Naive thymus-derived CD4-positive, alpha-beta T cell (primary cell): ENCODE measurements at regions of chr16 and their contacts with region 1.

Region 1: GRCh38 chr16:83075956-83076355 is 449.2 kb downstream of the CDH13 start:
- DNase-seq: no peak
- ATAC-seq: no peak
- H3K4me3 ChIP-seq: no peak overlapping the region
- H3K4me3 Mint-ChIP-seq: no peak overlapping the region
- H3K27ac ChIP-seq: no peak overlapping the region
- H3K27ac Mint-ChIP-seq: no peak overlapping the region
- H3K4me1 ChIP-seq: no peaks in the 10 kb centered on the region
- H3K4me1 Mint-ChIP-seq: no peaks in the 10 kb centered on the region
- H3K27me3 ChIP-seq: no peaks in the 10 kb centered on the region
- H3K27me3 Mint-ChIP-seq: peaks cover 0 to 14% (median 5%) of the 10 kb centered on the region in 5 donors

Region 2: GRCh38 chr16:83058376-83058775 is 17.6 kb before region 1 on chr16:
- CTCF ChIA-PET with region 1: no interaction called
- POLR2A ChIA-PET with region 1: no interaction called
- intact Hi-C with region 1: loop called in 1 of 2 experiments (anchors 1 kb)
- DNase-seq: no peak
- ATAC-seq: no peak
- H3K4me3 ChIP-seq: no peak overlapping the region
- H3K4me3 Mint-ChIP-seq: no peak overlapping the region
- H3K27ac ChIP-seq: no peak overlapping the region
- H3K27ac Mint-ChIP-seq: no peak overlapping the region
- H3K4me1 ChIP-seq: no peaks in the 10 kb centered on the region
- H3K4me1 Mint-ChIP-seq: no peaks in the 10 kb centered on the region
- H3K27me3 ChIP-seq: no peaks in the 10 kb centered on the region
- H3K27me3 Mint-ChIP-seq: peaks cover 0 to 7% (median 3%) of the 10 kb centered on the region in 5 donors

Region 3: DNA sequence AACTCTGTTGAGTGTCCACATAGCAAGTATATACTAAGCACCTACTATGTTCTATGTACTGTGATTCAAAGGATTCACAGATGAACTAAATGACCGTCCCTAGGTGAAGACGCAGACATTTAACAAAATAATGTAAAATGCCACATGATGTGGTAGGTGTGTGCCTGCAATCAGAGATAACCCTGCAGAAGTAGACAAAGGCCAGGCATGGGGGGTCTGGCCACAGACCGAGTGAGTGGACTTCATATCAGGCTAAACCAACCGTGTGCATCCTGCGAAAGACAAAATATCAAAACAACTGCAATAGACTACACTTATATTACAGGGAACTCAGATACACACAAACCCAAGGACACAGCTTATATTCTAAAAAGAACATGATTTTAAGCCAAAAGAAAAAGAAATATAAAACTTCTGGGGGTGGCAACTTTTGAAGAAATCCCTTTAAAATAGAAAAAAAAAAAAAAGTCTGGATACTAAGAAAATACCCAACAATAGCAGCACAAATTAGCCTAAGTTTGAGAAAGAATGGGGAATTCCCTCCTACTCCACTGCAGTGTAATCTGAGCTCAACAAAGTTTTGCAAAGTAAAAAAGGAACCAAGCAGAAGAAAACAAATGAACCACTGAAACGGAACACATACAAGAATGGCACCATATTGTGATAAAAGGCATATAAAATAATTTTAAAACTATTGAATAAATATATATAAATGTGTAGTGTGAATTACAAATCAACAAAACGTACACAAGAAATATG is 1056.8 kb after region 1 on chr16:
- CTCF ChIA-PET with region 1: no interaction called
- POLR2A ChIA-PET with region 1: no interaction called
- intact Hi-C with region 1: no loop called
- DNase-seq: no peak
- ATAC-seq: no peak
- H3K4me3 ChIP-seq: no peak overlapping the region
- H3K4me3 Mint-ChIP-seq: no peak overlapping the region
- H3K27ac ChIP-seq: no peak overlapping the region
- H3K27ac Mint-ChIP-seq: no peak overlapping the region
- H3K4me1 ChIP-seq: no peaks in the 10 kb centered on the region
- H3K4me1 Mint-ChIP-seq: peaks cover 2 to 19% (median 13%) of the 10 kb centered on the region in 7 donors
- H3K27me3 ChIP-seq: no peaks in the 10 kb centered on the region
- H3K27me3 Mint-ChIP-seq: no peaks in the 10 kb centered on the region